PC-3 (cell line): ENCODE measurements at regions of chr7 and their contacts with region 1.

Region 1: DNA sequence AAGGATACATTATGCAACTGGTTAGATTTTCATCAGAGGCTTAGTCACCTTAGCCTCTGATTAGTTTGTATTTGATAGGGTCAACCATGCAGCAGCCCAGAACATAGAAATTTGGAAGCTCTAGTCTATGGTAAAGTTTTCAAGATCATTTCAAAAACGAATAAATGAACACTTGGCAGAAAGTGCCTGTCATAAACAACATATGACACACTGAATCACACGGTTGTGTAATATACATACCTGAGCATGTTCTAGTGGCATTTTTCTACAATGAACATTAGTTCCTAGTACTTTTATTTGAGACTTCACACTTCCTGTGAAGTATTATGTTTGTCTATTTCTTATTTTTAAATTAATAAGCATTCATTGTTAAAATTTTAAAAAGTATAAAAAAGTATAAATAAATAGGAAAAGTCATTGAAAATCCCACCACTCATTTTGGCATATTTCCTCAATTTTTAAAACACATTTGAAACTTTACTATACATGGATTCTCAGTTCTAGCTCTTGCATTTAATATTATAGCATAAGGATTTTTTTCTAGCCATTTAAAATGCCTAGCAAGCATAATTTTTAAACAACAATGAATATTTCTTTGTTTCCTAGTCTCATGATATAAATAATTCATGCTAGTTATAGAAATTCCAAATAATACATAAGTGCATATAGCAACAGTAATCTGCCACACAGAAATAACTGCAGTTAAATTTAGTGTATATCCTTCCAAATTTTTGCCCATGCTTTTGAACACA is 25.7 kb upstream of the PRPS1L1 start:
- DNase-seq: peak; percentile 3
- ATAC-seq: no peak
- H3K4me3 ChIP-seq: no peak overlapping the region
- H3K27ac ChIP-seq: no peak overlapping the region
- H3K4me1 ChIP-seq: no peaks in the 10 kb centered on the region
- H3K27me3 ChIP-seq: no peaks in the 10 kb centered on the region
- CTCF ChIP-seq: no peak

Region 2: DNA sequence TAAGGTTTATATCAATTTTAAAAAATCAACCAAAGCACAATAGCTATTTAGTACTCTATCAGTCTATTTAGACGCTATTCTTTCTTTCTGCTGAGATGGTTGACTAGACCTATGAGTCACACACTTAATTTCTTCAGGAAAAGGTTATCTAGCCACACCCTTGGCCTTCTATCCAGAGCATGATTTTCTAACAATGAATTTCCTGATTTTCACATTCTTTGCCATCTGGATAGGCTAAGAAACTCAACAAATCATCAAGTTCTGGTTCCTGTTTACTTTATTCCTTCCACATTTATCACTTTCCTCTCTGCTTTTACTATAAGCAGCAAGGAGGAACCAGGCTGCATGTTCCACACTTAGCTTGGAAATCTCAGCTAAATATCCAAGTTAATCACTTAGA is 33.8 kb before region 1 on chr7:
- CTCF ChIA-PET with region 1: no interaction called
- POLR2A ChIA-PET with region 1: interaction called, 12 read pairs
- intact Hi-C with region 1: no loop called
- DNase-seq: peak; percentile 77
- ATAC-seq: peak; percentile 94
- H3K4me3 ChIP-seq: no peak overlapping the region
- H3K27ac ChIP-seq: peak overlapping the region; percentile 76
- H3K4me1 ChIP-seq: peaks cover 24% of the 10 kb centered on the region
- H3K27me3 ChIP-seq: no peaks in the 10 kb centered on the region
- CTCF ChIP-seq: no peak

Region 3: DNA sequence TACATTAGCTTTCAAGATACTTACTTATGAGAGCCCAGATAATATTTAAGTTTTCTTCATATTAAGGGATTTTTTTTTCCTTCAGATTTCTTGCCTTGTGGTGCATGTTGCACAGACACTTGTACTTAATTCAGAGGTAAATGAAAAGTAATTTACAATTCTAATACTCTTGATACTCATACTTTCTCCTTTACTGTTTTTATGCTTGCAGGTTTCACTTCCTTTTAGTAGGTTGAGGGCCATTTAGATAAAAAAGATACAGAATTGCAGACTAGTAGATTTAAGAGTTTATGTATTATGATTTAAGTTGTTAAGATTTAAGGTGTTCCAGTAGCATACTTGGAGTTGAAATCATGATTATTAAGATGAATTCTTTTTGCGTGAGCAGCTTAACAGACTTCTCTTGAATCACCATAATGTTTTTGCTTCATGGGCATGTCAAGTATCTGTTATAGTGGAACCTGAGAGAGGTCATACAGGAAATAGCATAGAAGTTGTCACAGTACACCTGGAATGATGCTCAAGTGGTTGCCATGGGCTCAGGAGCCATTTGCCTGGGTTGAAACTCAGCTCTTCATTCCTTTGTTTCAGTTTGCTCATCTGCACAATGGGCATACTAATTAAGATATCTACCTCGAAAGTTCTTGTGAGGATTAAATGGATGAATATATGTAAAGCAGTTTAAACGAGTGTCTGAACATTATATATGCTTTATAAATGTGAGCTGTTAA is 149.1 kb after region 1 on chr7:
- CTCF ChIA-PET with region 1: no interaction called
- POLR2A ChIA-PET with region 1: no interaction called
- intact Hi-C with region 1: no loop called
- DNase-seq: no peak
- ATAC-seq: no peak
- H3K4me3 ChIP-seq: no peak overlapping the region
- H3K27ac ChIP-seq: no peak overlapping the region
- H3K4me1 ChIP-seq: no peaks in the 10 kb centered on the region
- H3K27me3 ChIP-seq: no peaks in the 10 kb centered on the region
- CTCF ChIP-seq: no peak